Naive thymus-derived CD4-positive, alpha-beta T cell (primary cell): ENCODE measurements at regions of chr14 and their contacts with region 1.

Region 1: GRCh38 chr14:54773171-54773975 is 129.3 kb downstream of the GCH1 start:
- DNase-seq: peak; percentile 21 to 83 (median 58)
- ATAC-seq: peak; percentile 78
- H3K4me3 ChIP-seq: peak overlapping the region; percentile 14
- H3K4me3 Mint-ChIP-seq: peak overlapping the region in 9 of 10 donors; percentile 15 to 80 (median 71)
- H3K27ac ChIP-seq: peak overlapping the region; percentile 14
- H3K27ac Mint-ChIP-seq: peak overlapping the region; percentile 24 to 88 (median 77)
- H3K4me1 ChIP-seq: peaks cover 4 to 27% of the 10 kb centered on the region in 2 donors
- H3K4me1 Mint-ChIP-seq: peaks cover 19 to 42% (median 23%) of the 10 kb centered on the region in 7 donors
- H3K27me3 ChIP-seq: no peaks in the 10 kb centered on the region
- H3K27me3 Mint-ChIP-seq: peaks cover 0 to 31% (median 10%) of the 10 kb centered on the region in 5 donors

Region 2: GRCh38 chr14:54440873-54441868 is 332.2 kb before region 1 on chr14 and contains the start of gene CNIH1:
- CTCF ChIA-PET with region 1: no interaction called
- POLR2A ChIA-PET with region 1: no interaction called
- intact Hi-C with region 1: loop called (anchors 1 kb)
- DNase-seq: peak; percentile 85 to 99 (median 93)
- ATAC-seq: peak; percentile 97
- H3K4me3 ChIP-seq: peak within 1 kb of the TSS; percentile 73
- H3K4me3 Mint-ChIP-seq: peak within 1 kb of the TSS; percentile 85 to 97 (median 94)
- H3K27ac ChIP-seq: peak within 1 kb of the TSS; percentile 80
- H3K27ac Mint-ChIP-seq: peak within 1 kb of the TSS; percentile 87 to 98 (median 95)
- H3K4me1 ChIP-seq: peaks cover 9 to 23% of the 10 kb centered on the region in 2 donors
- H3K4me1 Mint-ChIP-seq: peaks cover 23 to 54% (median 49%) of the 10 kb centered on the region in 7 donors
- H3K27me3 ChIP-seq: no peaks in the 10 kb centered on the region
- H3K27me3 Mint-ChIP-seq: peaks cover 0 to 2% (median 0%) of the 10 kb centered on the region in 5 donors
- total RNA-seq, gene CNIH1: 50.5 to 87.9 (median 57.8) TPM

Region 3: DNA sequence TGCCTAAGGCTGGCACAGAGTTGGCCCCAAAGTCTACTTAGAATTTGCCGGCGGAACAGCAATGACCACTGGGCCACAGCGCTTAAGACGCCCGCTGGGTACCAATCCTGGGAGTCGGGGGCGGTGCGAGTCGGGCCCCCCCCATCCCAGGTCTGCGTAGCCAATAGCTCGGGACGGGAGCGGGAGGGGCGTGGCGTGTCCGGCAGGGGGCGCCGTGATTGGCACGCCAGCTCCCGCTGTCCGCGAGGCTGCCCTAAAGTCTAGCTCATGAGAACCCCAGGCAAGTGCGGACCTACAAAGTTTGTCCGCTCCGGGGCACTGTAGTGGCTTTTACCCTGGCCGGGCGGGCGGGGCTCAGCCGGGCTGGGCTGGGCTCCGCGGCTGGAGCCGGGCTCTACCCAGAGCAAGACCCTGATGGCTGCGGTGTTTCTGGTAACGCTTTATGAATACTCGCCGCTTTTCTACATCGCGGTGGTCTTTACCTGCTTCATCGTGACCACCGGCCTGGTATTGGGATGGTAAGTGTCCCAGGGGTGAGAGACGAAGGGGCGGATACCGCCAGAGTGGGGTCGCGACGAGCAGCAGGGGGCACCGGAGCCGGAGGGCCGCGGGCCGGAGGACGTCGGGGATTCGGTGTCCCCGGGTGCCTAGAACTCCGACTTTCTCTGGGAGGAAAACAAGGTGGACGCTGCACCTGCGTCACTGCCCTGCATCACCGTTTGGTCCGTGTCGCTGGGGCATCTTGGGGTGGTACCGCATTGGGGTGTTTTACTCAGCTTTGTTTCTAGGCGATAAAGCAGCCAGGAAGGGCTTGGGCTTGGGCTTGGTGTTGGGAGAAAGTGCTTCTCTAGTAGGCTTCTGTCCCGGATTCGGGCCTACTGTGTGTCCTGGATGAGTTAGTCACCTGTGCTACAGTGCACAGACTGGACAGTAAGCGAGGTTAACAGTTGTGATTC is 263.5 kb before region 1 on chr14 and contains the start of gene CGRRF1:
- CTCF ChIA-PET with region 1: no interaction called
- POLR2A ChIA-PET with region 1: no interaction called
- intact Hi-C with region 1: loop called (anchors 1 kb)
- DNase-seq: peak; percentile 86 to 98 (median 89)
- ATAC-seq: peak; percentile 99
- H3K4me3 ChIP-seq: peak within 1 kb of the TSS; percentile 93
- H3K4me3 Mint-ChIP-seq: peak within 1 kb of the TSS; percentile 87 to 99 (median 96)
- H3K27ac ChIP-seq: peak within 1 kb of the TSS; percentile 72
- H3K27ac Mint-ChIP-seq: peak within 1 kb of the TSS; percentile 85 to 93 (median 89)
- H3K4me1 ChIP-seq: peaks cover 11% of the 10 kb centered on the region in 2 donors
- H3K4me1 Mint-ChIP-seq: peaks cover 20 to 56% (median 53%) of the 10 kb centered on the region in 7 donors
- H3K27me3 ChIP-seq: no peaks in the 10 kb centered on the region
- H3K27me3 Mint-ChIP-seq: peaks cover 0 to 10% (median 0%) of the 10 kb centered on the region in 5 donors
- total RNA-seq, gene CGRRF1: 11.2 to 24.1 (median 17.3) TPM

Region 4: DNA sequence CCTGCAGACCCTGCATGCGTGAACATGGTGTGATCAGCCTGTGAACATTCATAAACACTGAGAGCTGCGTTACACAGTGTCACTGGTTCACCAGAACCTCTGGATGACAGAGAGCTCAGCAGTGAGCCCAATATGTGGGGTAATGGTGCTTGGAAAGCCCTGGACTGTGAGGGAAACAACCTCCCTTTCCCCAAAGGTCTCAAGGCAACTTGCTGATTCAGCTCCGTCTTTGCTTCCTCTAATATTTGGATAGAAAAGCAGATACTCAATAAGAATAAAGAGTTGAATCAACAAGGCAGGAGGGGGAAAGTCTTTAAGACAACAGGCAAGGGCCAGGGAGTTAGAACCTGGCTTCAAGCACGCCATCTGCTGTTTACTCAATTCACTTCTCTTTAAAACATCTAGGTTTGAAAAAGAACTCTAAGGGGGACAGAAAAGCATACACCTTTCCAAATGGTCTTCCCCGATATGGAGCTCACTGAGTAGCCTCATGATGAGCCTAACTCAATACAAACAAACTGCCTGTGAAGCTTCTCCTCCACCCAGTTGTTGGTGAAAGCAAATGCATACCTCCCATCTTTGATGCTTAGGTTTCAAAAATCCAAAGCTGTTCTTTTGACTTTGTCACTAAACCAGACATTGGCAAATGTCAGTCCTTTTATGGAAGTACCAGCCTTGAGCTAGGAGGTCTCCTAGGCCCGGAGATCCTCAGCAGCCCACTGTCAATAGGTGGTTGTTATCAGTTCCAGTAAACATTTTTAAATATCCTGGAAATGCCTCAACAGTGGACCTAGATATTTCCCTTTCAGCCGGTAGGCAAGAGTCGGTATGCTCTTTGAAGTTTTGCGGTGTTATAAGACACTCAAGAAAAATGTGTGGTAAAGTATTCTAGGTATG is 130.3 kb before region 1 on chr14:
- CTCF ChIA-PET with region 1: no interaction called
- POLR2A ChIA-PET with region 1: no interaction called
- intact Hi-C with region 1: loop called in 1 of 2 experiments (anchors 1 kb)
- DNase-seq: peak in 4 of 9 donors; percentile 18 to 29 (median 22)
- ATAC-seq: peak; percentile 42
- H3K4me3 ChIP-seq: no peak overlapping the region
- H3K4me3 Mint-ChIP-seq: no peak overlapping the region
- H3K27ac ChIP-seq: no peak overlapping the region
- H3K27ac Mint-ChIP-seq: no peak overlapping the region
- H3K4me1 ChIP-seq: no peaks in the 10 kb centered on the region
- H3K4me1 Mint-ChIP-seq: peaks cover 0 to 4% (median 0%) of the 10 kb centered on the region in 7 donors
- H3K27me3 ChIP-seq: no peaks in the 10 kb centered on the region
- H3K27me3 Mint-ChIP-seq: peaks cover 0 to 5% (median 3%) of the 10 kb centered on the region in 5 donors

Region 5: DNA sequence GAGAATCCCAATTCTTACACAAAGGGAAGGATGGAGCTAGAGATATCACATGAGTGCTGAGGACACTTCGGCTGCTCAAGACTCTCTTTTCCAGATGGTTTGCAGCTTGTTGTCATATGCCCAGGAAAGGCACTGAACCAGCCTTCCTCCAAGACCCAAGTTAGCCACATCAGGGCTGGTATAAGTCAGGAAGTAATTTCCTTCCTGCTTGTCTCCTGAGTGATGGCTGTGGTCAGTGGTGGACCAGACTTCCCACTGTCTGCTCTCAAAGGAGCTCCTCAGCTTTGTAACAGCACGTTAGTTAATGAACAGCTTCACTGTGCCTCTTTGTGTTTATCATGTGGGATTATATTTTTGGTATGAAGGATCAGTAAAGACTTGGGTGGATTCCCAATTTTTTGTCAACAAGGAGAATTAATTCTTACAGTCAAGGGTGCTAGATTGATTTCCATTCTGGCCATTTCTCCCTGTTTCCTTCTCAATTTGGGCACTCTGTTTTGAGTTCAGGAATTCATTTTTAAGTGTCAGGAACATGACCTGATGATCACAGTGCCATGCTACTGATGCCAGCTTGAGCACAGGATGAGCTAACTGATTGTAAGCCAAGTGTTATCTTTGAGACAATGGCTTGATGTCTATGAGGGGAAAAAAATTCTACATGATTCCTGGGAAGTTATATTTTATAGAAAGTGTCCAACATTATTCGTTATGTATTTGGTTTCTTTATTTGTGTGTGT is 16.5 kb before region 1 on chr14:
- CTCF ChIA-PET with region 1: interaction called, 4 read pairs
- POLR2A ChIA-PET with region 1: no interaction called
- intact Hi-C with region 1: loop called in 1 of 2 experiments (anchors 1 kb)
- DNase-seq: no peak
- ATAC-seq: no peak
- H3K4me3 ChIP-seq: no peak overlapping the region
- H3K4me3 Mint-ChIP-seq: no peak overlapping the region
- H3K27ac ChIP-seq: no peak overlapping the region
- H3K27ac Mint-ChIP-seq: peak overlapping the region in 1 of 9 donors; percentile 3
- H3K4me1 ChIP-seq: no peaks in the 10 kb centered on the region
- H3K4me1 Mint-ChIP-seq: peaks cover 0 to 20% (median 11%) of the 10 kb centered on the region in 7 donors
- H3K27me3 ChIP-seq: no peaks in the 10 kb centered on the region
- H3K27me3 Mint-ChIP-seq: peaks cover 0 to 21% (median 8%) of the 10 kb centered on the region in 5 donors

Region 6: DNA sequence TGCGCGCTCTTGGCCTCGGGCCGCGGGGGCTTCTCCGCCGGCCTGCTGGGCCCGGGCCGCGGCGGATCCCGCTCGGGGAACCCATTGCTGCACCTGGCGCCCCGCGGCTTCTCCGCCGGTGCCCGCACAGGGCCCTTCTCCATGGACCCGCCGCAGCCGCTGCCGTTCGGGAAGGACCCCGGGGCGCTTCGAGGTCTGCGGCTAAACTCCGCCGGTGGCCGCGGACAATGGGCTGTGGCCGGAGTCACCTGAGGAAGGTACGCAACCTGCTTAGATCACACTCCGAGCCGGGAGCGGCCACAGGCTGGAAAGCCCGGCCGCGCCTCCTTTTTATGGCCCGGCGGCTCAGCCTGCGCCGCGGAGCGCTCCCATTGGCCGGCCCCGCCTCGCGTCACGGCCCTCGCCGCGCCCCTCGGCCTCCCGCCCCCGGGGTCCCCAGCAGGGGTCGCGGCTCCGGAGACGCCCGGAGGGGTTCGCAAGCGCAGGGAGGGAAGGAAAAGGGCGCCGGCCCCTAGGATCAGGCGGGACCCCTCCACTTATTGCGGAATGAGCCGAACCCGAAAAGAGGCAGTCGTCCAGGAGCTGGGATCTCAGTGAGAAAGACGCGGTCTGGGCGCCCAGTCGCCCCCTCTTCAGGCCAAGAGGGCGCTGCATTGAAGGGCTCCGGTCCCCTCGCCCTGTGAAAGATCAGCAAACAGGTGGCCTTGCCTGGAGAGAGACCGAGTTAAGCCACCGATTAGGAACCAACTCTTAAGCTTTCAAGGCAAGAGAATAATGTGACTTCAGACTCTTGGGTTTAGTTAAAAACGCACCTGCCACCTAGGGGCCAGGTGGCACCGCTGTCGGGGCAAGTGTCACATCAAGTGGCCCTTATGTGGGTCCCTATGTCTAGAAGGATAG is 129.4 kb after region 1 on chr14 and contains the start of gene GCH1:
- CTCF ChIA-PET with region 1: interaction called, 4 read pairs
- POLR2A ChIA-PET with region 1: no interaction called
- intact Hi-C with region 1: loop called in 1 of 2 experiments (anchors 1 kb)
- DNase-seq: peak; percentile 63 to 85 (median 71)
- ATAC-seq: peak; percentile 88
- H3K4me3 ChIP-seq: peak within 1 kb of the TSS; percentile 99
- H3K4me3 Mint-ChIP-seq: peak within 1 kb of the TSS; percentile 82 to 94 (median 90)
- H3K27ac ChIP-seq: peak within 1 kb of the TSS; percentile 88
- H3K27ac Mint-ChIP-seq: peak within 1 kb of the TSS; percentile 66 to 95 (median 91)
- H3K4me1 ChIP-seq: peaks cover under 1 to 9% of the 10 kb centered on the region in 2 donors
- H3K4me1 Mint-ChIP-seq: peaks cover 15 to 43% (median 31%) of the 10 kb centered on the region in 7 donors
- H3K27me3 ChIP-seq: no peaks in the 10 kb centered on the region
- H3K27me3 Mint-ChIP-seq: no peaks in the 10 kb centered on the region
- total RNA-seq, gene GCH1: 21.4 to 64.1 (median 23.2) TPM